Mammary epithelial cell (primary cell): ENCODE measurements at regions of chr5 and their contacts with region 1.

Region 1: GRCh38 chr5:151093476-151093889 is 12.6 kb upstream of the TNIP1 start:
- DNase-seq: peak; percentile 97
- H3K4me3 ChIP-seq: peak overlapping the region in 2 of 3 experiments; percentile 8 to 14
- H3K27ac ChIP-seq: peak overlapping the region; percentile 96
- H3K4me1 ChIP-seq: peaks cover 41% of the 10 kb centered on the region
- H3K27me3 ChIP-seq: no peaks in the 10 kb centered on the region
- CTCF ChIP-seq: no peak

Region 2: GRCh38 chr5:151075698-151076331 is 17.7 kb before region 1 on chr5:
- CTCF ChIA-PET with region 1: no interaction called
- dilution Hi-C with region 1: no loop called
- in situ Hi-C with region 1: no loop called
- intact Hi-C with region 1: loop called (anchors 1 kb)
- DNase-seq: peak; percentile 93
- H3K4me3 ChIP-seq: no peak overlapping the region
- H3K27ac ChIP-seq: peak overlapping the region; percentile 75
- H3K4me1 ChIP-seq: peaks cover 58% of the 10 kb centered on the region
- H3K27me3 ChIP-seq: no peaks in the 10 kb centered on the region
- CTCF ChIP-seq: no peak

Region 3: GRCh38 chr5:151141535-151141934 is 48.1 kb after region 1 on chr5:
- CTCF ChIA-PET with region 1: no interaction called
- dilution Hi-C with region 1: loop called (anchors 5 kb)
- in situ Hi-C with region 1: no loop called
- intact Hi-C with region 1: no loop called
- DNase-seq: peak; percentile 40
- H3K4me3 ChIP-seq: no peak overlapping the region
- H3K27ac ChIP-seq: no peak overlapping the region
- H3K4me1 ChIP-seq: peaks cover 8% of the 10 kb centered on the region
- H3K27me3 ChIP-seq: no peaks in the 10 kb centered on the region
- CTCF ChIP-seq: no peak

Region 4: DNA sequence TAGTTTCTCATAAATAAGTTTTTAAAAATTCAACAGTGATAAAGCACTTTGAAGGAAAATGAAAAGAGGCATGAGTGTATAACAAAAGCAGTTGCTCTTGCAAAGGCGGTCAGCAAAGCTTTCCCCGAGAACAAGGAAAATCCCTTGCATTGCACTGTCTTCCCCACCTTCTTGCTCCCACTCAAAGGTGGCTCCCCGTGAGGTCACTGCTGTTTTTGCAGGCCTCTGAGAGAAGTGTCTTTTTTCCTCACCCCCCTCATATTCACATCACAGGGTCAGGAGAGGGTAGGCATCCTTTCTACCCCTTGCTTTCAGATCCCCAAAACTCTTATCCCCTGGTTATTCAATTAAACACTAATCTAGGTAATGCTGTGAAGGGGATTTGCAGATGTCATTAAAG is 338.7 kb after region 1 on chr5:
- CTCF ChIA-PET with region 1: no interaction called
- dilution Hi-C with region 1: no loop called
- in situ Hi-C with region 1: no loop called
- intact Hi-C with region 1: no loop called
- DNase-seq: no peak
- H3K4me3 ChIP-seq: no peak overlapping the region
- H3K27ac ChIP-seq: no peak overlapping the region
- H3K4me1 ChIP-seq: no peaks in the 10 kb centered on the region
- H3K27me3 ChIP-seq: peaks cover 11% of the 10 kb centered on the region
- CTCF ChIP-seq: no peak